Sciatic nerve (tissue), 2 donors: ENCODE measurements at regions of chr5 and their contacts with region 1.

Region 1: DNA sequence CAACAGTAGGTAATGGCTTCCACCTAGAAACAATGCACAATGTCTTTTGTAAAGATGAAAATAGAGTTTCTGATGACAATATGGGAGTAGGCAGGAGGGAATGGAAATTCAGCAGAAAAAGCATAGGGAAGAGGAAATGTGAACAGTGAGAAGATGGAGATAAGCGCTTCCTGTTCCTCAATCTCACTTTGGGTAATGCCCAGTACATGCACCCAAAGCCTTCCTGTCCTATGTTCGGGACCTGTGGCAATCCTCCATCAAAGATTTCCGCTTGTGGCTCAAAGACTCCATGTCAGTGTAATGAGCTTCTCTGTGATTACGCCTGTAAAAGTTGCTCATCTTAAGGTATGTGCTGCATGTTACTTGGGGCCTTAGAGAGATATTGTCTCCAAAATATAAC is 2.7 kb downstream of the UGT3A1 start:
- DNase-seq: no peak
- ATAC-seq: no peak

Region 2: GRCh38 chr5:35538198-35538931 is 450.2 kb before region 1 on chr5:
- intact Hi-C with region 1: loop called (anchors 5 kb)
- DNase-seq: no peak
- ATAC-seq: no peak